ENCODE measurements at regions of chr3 and their contacts with region 1.

Region 1: GRCh38 chr3:179147873-179148615 is at the start of gene PIK3CA:
- H3K4me3 Mint-ChIP-seq: no peak within 1 kb of the TSS
- H3K27ac Mint-ChIP-seq: no peak within 1 kb of the TSS
- H3K4me1 Mint-ChIP-seq: peaks cover 22% of the 10 kb centered on the region
- H3K27me3 Mint-ChIP-seq: peaks cover 7% of the 10 kb centered on the region

Region 2: GRCh38 chr3:179071550-179072397 is 76.3 kb before region 1 on chr3 and contains the start of gene ZMAT3:
- intact Hi-C with region 1: loop called (anchors 1 kb)
- H3K4me3 Mint-ChIP-seq: peak within 1 kb of the TSS; percentile 93
- H3K27ac Mint-ChIP-seq: peak within 1 kb of the TSS; percentile 88
- H3K4me1 Mint-ChIP-seq: peaks cover 16% of the 10 kb centered on the region
- H3K27me3 Mint-ChIP-seq: peaks cover 2% of the 10 kb centered on the region

Region 3: DNA sequence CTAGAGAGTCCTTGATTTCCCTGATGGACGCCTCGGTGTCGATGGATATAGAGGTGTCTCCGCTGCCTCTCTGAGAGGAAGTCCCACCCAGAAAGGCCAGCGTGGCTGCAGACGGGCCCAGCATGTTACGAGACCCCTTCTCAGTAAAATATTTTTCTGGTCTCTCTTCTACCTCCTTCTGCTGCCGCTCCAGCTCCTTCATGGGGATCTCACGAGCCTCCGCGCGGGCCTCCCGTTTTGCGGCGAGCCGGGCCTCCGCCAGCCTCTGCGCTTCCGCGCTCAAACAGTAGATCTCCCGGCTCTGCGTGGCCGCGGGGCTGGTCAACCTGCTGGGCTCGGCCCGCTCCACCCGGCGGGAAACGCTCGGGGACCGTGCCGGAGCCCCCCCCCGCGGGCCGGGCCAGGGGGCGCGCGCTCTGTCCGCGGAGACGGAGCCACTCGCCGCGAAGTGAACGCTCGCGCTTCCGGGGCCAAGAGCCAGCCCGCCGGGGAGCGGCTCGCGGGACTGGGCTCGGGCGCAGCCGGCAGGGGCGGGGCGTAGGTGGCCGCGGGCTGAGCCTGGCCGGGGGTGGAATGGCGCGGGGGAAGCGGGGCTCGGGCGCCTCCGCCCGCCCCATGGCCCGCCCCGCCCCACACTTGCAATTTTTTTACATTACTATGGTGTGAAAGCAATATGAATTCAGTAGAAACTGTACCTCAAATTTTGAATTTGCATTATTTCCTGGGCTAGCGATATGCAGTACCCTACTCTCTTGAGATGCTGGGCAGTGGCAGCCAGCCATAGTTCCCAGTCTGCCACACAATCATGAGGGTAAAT is 113.1 kb after region 1 on chr3:
- intact Hi-C with region 1: loop called (anchors 2 kb)
- H3K4me3 Mint-ChIP-seq: peak overlapping the region; percentile 80
- H3K27ac Mint-ChIP-seq: peak overlapping the region; percentile 74
- H3K4me1 Mint-ChIP-seq: peaks cover 18% of the 10 kb centered on the region
- H3K27me3 Mint-ChIP-seq: peaks cover 8% of the 10 kb centered on the region

Region 4: GRCh38 chr3:179347345-179348194 is 199.5 kb after region 1 on chr3 and contains the start of gene MFN1:
- intact Hi-C with region 1: loop called (anchors 1 kb)
- H3K4me3 Mint-ChIP-seq: peak within 1 kb of the TSS; percentile 98
- H3K27ac Mint-ChIP-seq: peak within 1 kb of the TSS; percentile 94
- H3K4me1 Mint-ChIP-seq: peaks cover 16% of the 10 kb centered on the region
- H3K27me3 Mint-ChIP-seq: peaks cover 2% of the 10 kb centered on the region

Region 5: DNA sequence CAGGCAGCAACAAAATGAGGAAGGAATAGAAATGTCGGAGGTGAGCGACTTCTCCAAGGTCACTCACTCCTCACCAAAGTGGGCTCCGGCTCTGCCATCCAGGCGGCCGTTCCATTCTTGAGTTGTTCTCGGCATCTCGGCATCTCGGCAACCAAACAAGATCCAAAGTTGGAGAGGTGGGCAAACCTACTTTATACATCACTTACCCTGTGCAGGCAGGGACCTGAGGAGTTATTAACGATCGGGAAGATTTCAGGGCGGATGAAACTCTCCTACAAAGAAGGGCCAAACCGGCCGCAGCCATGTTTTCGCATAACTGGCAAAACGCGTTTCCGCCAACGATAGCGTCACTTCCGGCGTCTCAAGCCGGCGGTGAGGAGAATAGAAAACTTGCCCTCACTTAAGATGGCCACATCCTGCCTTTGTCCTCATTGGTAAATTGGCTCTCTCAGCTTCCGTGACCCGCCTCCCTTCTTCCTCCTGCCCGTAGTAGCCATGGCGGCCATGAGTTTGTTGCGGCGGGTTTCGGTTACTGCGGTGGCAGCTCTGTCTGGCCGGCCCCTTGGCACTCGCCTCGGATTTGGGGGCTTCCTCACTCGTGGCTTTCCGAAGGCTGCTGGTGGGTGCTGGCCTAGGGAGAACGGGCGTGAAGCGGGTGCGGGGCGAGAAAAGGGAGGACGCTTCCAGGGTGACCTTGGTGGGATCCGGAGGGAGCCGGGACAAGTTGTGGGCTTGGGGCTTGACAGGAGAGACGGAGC is 456.5 kb after region 1 on chr3 and contains the starts of genes MRPL47 and NDUFB5:
- intact Hi-C with region 1: loop called (anchors 5 kb)
- H3K4me3 Mint-ChIP-seq: peak within 1 kb of the TSS; percentile 100
- H3K27ac Mint-ChIP-seq: peak within 1 kb of the TSS; percentile 100
- H3K4me1 Mint-ChIP-seq: peaks cover 31% of the 10 kb centered on the region
- H3K27me3 Mint-ChIP-seq: no peaks in the 10 kb centered on the region